Activated B cell treated with CpG ODN at 0.5 μM for 24 hours (primary cell): ENCODE measurements at regions of chr3 and their contacts with region 1.

Region 1: DNA sequence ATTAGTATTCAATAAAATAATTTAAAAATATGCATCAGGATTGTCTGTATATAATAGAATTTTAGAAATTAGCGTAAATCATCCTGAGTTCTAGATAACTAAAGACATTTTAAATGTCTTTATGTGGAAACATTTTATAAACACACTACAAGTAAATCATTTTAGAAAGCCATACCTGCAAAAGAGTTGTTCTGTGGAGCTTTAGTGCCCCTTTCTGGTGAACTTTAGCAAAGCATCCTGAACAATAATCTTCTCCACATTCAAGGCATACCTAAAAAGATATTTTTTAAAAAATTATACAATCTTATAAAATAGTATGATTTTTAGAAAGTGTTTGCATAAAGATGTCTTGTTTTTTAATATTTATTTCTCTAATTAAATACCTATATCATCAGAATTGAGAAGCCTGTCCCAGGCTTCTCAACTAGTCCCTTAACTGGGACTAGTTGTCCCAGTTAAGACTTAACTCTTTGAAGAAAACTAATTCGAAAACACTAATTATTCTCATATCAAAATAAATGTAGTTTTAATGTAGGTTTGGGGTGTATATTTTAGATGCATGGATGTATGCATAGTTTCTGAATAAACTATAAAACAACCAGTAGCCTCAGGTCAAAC is 29.7 kb downstream of the ZBBX start:
- DNase-seq: no peak
- ATAC-seq: no peak
- H3K4me3 Mint-ChIP-seq: no peak overlapping the region
- H3K27ac Mint-ChIP-seq: no peak overlapping the region
- H3K4me1 Mint-ChIP-seq: no peaks in the 10 kb centered on the region
- H3K27me3 Mint-ChIP-seq: peaks cover 7% of the 10 kb centered on the region
- CTCF ChIP-seq: no peak

Region 2: DNA sequence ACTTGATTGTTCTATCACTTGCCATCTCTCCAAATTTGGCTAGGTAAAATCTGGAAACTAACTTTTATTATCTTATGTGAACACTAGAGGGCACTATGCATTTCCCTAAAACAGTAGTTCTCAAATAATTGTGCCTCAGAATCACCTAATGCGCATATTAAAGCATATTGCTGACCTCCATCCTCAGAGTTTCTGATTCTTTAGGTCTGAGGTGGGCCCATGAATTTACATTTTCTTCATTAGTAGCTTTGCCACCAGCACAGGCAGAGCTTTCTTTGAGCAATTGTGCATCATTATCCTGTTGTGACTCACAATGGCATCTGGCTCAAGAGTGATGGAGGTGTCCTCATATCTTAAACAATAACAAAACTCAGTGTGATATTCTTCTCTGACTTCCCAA is 1495.7 kb before region 1 on chr3:
- CTCF ChIA-PET with region 1: no interaction called
- POLR2A ChIA-PET with region 1: no interaction called
- intact Hi-C with region 1: loop called (anchors 10 kb)
- DNase-seq: no peak
- ATAC-seq: no peak
- H3K4me3 Mint-ChIP-seq: no peak overlapping the region
- H3K27ac Mint-ChIP-seq: no peak overlapping the region
- H3K4me1 Mint-ChIP-seq: no peaks in the 10 kb centered on the region
- H3K27me3 Mint-ChIP-seq: no peaks in the 10 kb centered on the region
- CTCF ChIP-seq: no peak

Region 3: DNA sequence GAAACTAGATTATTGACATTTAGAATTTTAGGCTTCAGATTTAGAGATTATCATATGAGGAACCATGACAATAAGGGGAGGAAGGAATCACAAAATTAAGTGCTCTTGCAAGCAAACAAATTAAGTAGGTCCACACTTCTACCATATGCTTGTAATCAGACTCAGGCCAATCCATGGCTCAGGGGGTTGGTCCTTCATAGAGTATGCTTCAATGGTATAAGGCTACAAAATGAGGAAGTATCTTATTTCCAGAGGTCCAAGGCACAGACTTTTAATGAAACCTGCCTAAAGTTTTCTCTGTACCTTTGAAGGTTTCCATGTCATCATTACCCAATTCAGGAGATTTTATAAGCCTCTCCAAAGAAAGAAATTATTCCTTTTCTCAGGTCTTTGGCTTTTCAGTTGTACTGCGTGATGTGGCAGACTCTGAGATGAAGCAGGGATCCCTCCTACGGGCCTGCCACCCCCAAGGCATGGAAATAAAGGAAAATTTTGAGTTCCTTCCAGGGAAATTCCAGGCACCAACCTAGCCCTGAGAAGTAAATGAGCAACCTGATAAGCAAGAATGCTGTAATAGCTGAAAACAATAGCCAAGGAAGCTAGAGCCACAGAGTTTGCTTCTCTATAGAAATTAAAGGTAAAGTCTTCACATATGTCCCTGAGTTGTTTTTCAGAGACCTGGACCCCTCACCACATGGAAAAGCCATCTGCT is 87.2 kb after region 1 on chr3:
- CTCF ChIA-PET with region 1: no interaction called
- POLR2A ChIA-PET with region 1: no interaction called
- intact Hi-C with region 1: no loop called
- DNase-seq: no peak
- ATAC-seq: no peak
- H3K4me3 Mint-ChIP-seq: no peak overlapping the region
- H3K27ac Mint-ChIP-seq: no peak overlapping the region
- H3K4me1 Mint-ChIP-seq: no peaks in the 10 kb centered on the region
- H3K27me3 Mint-ChIP-seq: no peaks in the 10 kb centered on the region
- CTCF ChIP-seq: no peak